Posterior vena cava (tissue), 2 donors: ENCODE measurements at regions of chr6 and their contacts with region 1.

Region 1: GRCh38 chr6:35016502-35017321 is 124.4 kb downstream of the TCP11 start:
- DNase-seq: peak; percentile 85

Region 2: DNA sequence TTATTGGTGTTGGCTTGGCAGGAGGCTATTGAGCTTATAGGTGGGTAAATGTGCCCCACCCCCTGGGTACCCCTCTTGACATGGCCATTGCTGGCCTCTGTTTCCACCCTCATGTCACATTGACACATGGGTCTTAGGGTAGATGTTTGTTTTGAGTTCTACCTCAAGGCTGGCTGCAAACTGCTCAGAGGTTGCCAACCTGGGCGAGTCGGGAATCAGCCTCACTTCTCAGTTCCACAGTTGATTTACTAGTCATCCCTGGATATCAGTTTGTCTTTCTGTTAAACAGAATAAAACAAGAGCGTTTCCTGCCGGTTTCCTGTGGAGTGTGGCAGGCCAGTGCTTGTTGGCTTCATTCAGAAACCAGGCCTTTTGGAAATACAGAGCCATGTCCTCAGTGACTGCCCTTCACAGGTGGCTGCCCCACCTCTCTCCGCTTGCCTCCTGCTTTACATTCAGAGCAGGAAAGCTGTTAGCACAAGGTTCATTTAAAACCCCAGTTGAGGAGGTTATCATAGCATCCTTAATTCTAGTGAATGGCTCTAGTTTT is 18.8 kb after region 1 on chr6:
- intact Hi-C with region 1: loop called in 1 of 2 experiments (anchors 2 kb)
- DNase-seq: no peak

Region 3: DNA sequence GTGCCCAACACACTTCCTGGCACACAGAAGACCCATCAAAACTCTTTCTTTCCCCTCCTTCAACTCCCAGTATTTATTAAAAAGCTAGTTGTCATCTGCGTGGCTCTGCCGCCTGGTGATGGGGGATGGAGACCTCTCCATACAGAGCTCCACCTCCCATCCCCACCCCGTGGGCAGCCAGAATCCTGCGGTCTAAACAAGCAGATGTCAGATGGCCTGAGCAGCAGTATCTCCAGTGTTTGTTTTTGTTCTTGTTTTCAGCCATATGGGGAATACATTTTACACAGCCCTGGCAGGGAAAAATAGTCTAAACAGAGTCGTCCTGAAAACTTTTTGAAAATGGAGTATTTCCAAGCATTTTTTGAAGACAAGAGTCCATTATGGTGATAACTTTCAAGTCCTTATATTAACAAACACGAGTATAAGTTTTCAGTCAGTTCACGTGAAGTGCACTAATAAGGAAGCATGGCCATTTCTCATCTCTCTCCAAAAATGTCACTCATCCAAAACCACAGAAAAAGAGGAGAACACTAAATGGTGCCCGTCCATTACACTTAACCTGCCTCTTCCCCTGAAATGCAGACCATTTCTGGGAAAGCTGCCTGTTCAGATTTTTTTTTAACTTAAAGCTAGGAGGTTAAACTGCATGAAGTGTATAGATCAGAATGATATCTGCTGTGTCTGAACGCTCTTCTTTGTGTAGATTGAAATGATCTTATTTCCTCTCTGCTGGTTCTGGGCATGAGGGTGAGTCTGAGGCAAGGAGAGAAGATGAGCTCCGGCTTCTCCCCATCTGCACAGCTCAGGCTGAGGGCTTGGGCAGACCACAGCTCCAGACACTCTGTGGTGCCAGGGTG is 33.4 kb after region 1 on chr6:
- intact Hi-C with region 1: loop called in 1 of 2 experiments (anchors 5 kb)
- DNase-seq: no peak

Region 4: DNA sequence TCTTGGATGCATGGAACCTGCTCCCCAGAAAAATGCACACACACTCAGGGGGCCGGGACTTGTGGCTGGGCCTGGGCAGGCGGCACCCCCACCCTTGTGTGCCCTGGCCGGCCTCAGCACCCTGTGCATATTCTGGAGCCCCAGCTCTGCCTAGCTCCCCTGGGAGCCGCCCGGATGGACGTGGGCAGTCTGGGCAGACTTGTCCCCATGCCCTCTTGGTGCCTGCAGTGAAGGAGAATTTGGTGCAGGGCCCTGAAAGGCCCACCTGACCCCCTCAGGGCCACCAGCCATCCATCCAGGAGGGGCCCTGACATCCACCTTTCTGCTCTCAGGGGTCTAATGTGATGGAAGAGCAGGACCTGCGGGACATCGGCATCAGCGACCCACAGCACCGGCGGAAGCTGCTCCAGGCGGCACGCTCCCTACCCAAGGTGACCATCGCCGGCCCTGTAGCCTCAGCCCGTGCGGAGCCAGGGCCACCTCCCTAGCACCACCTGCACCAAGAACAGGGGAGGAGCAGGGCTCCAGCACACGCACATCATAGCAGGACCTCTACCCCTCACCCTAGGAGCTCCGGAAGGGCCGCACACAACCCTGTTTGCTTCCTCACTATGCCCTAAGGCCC is 61.6 kb after region 1 on chr6:
- intact Hi-C with region 1: loop called in 1 of 2 experiments (anchors 1 kb)
- DNase-seq: peak; percentile 75